MCF 10A (cell line): ENCODE measurements at regions of chr1 and their contacts with region 1.

Region 1: GRCh38 chr1:34742667-34743270 is 12.1 kb upstream of the GJB5 start:
- DNase-seq: peak; percentile 77
- H3K4me3 Mint-ChIP-seq: no peak overlapping the region
- H3K27ac Mint-ChIP-seq: peak overlapping the region; percentile 20
- H3K4me1 Mint-ChIP-seq: no peaks in the 10 kb centered on the region
- H3K27me3 Mint-ChIP-seq: no peaks in the 10 kb centered on the region
- CTCF ChIP-seq: peak; percentile 97

Region 2: GRCh38 chr1:33633019-33633801 is 1109.6 kb before region 1 on chr1:
- CTCF ChIA-PET with region 1: interaction called, 32 read pairs
- POLR2A ChIA-PET with region 1: no interaction called
- intact Hi-C with region 1: loop called (anchors 2 kb)
- DNase-seq: peak; percentile 88
- H3K4me3 Mint-ChIP-seq: no peak overlapping the region
- H3K27ac Mint-ChIP-seq: no peak overlapping the region
- H3K4me1 Mint-ChIP-seq: peaks cover 6% of the 10 kb centered on the region
- H3K27me3 Mint-ChIP-seq: peaks cover 62% of the 10 kb centered on the region
- CTCF ChIP-seq: peak; percentile 94

Region 3: GRCh38 chr1:34113887-34114286 is 628.9 kb before region 1 on chr1:
- CTCF ChIA-PET with region 1: interaction called, 29 read pairs
- POLR2A ChIA-PET with region 1: no interaction called
- intact Hi-C with region 1: no loop called
- DNase-seq: peak; percentile 22
- H3K4me3 Mint-ChIP-seq: no peak overlapping the region
- H3K27ac Mint-ChIP-seq: no peak overlapping the region
- H3K4me1 Mint-ChIP-seq: no peaks in the 10 kb centered on the region
- H3K27me3 Mint-ChIP-seq: no peaks in the 10 kb centered on the region
- CTCF ChIP-seq: peak; percentile 10

Region 4: GRCh38 chr1:34597877-34598514 is 144.8 kb before region 1 on chr1:
- CTCF ChIA-PET with region 1: interaction called, 14 read pairs
- POLR2A ChIA-PET with region 1: no interaction called
- intact Hi-C with region 1: loop called (anchors 1 kb)
- DNase-seq: peak; percentile 70
- H3K4me3 Mint-ChIP-seq: no peak overlapping the region
- H3K27ac Mint-ChIP-seq: no peak overlapping the region
- H3K4me1 Mint-ChIP-seq: no peaks in the 10 kb centered on the region
- H3K27me3 Mint-ChIP-seq: peaks cover 31% of the 10 kb centered on the region
- CTCF ChIP-seq: peak; percentile 96

Region 5: DNA sequence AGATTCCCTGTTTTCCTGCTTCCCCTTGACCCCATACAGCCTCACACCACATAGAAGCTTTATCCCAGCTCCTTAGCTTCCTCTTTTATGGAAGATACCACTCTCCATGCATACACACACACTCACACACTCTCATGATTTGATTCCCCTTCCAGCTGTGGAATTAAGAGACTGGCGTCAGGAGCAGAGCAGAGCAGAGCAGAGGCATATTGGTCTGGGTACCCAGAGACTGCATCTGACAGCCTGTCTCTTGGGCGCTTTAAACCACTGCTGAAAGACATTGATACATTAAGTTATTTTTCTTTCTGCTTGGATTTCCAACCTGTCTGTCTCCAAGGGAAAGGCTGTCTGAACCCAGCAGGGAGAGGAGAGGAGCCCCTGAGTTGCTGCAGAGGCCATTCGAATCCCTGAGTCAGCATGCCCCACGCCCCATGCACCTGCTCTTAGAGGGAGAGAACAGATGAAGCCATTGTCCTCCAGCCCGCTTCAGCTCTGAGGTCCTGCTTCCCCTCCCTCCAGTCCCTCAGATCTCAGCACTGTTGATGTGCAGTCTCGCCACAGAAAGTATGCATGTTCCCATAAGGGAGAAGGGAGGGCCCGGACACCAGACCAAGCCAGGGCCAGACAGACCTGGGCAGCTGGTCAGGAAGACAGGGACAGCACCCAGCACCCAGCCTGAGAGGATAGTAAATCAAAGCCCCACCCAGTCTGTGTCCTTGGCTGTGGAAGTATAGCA is 54.6 kb before region 1 on chr1:
- CTCF ChIA-PET with region 1: interaction called, 10 read pairs
- POLR2A ChIA-PET with region 1: no interaction called
- intact Hi-C with region 1: no loop called
- DNase-seq: no peak
- H3K4me3 Mint-ChIP-seq: no peak overlapping the region
- H3K27ac Mint-ChIP-seq: no peak overlapping the region
- H3K4me1 Mint-ChIP-seq: no peaks in the 10 kb centered on the region
- H3K27me3 Mint-ChIP-seq: peaks cover 67% of the 10 kb centered on the region
- CTCF ChIP-seq: no peak

Region 6: DNA sequence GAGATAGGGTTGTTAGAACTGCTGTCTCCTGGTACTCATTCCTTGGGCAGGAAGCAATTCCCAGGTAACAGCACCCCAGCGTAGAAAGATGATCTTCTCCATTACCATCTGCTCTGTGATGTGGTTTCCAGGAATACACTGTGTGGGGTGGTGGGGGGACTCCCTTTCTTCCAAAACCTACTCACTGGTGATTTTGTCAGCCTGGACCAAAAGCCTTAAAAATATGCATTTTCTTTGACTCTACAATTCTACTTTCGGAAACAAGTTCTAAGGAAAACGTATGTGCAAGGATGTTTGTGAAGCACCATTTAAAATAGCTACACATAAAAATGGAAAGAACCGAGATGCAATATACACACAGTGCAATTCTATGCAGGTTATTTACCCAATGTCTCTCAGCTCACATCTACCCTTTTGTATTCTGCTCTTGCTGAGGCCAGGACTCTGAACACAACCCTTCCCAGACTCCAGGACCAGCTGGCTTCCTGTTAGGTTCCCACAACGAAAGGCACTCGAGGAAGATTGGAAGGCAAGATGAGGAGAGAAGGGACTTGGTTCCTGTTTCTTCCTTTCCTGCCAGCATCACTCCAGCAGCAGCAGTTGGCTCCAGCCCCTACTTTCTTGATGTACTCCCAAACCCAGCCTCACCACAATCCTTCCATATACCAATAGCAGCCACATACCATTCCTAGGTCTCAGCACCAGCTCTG is 21.0 kb before region 1 on chr1:
- CTCF ChIA-PET with region 1: interaction called, 15 read pairs
- POLR2A ChIA-PET with region 1: no interaction called
- intact Hi-C with region 1: no loop called
- DNase-seq: no peak
- H3K4me3 Mint-ChIP-seq: no peak overlapping the region
- H3K27ac Mint-ChIP-seq: no peak overlapping the region
- H3K4me1 Mint-ChIP-seq: no peaks in the 10 kb centered on the region
- H3K27me3 Mint-ChIP-seq: peaks cover 70% of the 10 kb centered on the region
- CTCF ChIP-seq: no peak

Region 7: GRCh38 chr1:34754964-34755637 is 12.3 kb after region 1 on chr1 and contains the start of gene GJB5:
- CTCF ChIA-PET with region 1: interaction called, 82 read pairs
- POLR2A ChIA-PET with region 1: interaction called, 8 read pairs
- intact Hi-C with region 1: no loop called
- DNase-seq: peak; percentile 94
- H3K4me3 Mint-ChIP-seq: peak within 1 kb of the TSS; percentile 93
- H3K27ac Mint-ChIP-seq: peak within 1 kb of the TSS; percentile 96
- H3K4me1 Mint-ChIP-seq: peaks cover 16% of the 10 kb centered on the region
- H3K27me3 Mint-ChIP-seq: no peaks in the 10 kb centered on the region
- CTCF ChIP-seq: no peak
- total RNA-seq, gene GJB5: 26.5 and 33.2 TPM in 2 replicates

Region 8: GRCh38 chr1:34924759-34925555 is 182.2 kb after region 1 on chr1:
- CTCF ChIA-PET with region 1: no interaction called
- POLR2A ChIA-PET with region 1: no interaction called
- intact Hi-C with region 1: no loop called
- DNase-seq: peak; percentile 71
- H3K4me3 Mint-ChIP-seq: no peak overlapping the region
- H3K27ac Mint-ChIP-seq: no peak overlapping the region
- H3K4me1 Mint-ChIP-seq: peaks cover 6% of the 10 kb centered on the region
- H3K27me3 Mint-ChIP-seq: peaks cover 80% of the 10 kb centered on the region
- CTCF ChIP-seq: no peak